OCI-LY7 (cell line): ENCODE measurements at regions of chr10 and their contacts with region 1.

Region 1: DNA sequence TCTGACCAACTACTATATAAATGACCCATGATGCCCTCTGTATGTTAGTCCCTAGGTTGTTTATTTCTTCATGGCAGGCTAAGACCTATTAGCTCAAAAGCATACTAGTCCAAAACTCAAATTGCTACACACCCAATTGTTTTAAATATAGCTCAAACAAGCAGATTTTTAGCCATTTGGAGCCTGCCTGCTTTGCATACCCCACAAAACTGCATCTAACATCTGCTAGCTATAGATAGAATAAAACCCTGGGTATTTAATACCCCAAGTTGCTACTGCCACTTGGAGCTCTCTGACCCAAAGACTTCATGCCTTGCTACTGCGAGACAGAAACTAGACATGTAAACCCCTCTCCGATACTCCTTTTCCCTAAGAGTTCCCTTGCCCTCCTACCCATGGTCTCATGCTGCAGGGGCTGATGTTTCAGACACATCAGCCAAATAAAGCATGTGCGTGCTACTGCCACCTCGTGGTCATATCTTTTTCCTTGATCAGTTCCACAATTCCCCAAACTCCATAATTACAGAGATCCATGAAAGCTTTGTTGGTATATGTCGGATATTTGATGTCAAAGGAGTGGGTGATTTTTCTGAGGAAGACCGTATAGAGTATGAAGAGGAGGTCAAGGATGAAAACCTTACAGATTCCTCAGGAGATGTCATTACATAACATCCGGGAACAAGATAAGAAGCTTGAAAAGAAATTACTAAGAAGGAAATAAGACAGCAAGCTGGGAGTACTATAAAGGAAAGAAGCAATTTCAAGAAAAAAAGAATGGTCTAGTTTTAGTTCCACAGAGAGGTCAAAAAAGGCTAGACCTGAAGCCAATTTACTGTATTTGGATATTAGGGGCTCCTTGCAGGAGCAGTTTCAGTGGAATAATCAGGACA is 386.6 kb downstream of the SH2D4B start:
- DNase-seq: peak; percentile 42
- H3K4me3 ChIP-seq: no peak overlapping the region
- H3K27ac ChIP-seq: no peak overlapping the region
- H3K4me1 ChIP-seq: no peaks in the 10 kb centered on the region
- CTCF ChIP-seq: peak; percentile 90

Region 2: GRCh38 chr10:80699602-80700039 is 224.7 kb before region 1 on chr10:
- CTCF ChIA-PET with region 1: interaction called, 4 read pairs
- POLR2A ChIA-PET with region 1: no interaction called
- intact Hi-C with region 1: loop called (anchors 5 kb)
- DNase-seq: peak; percentile 59
- H3K4me3 ChIP-seq: no peak overlapping the region
- H3K27ac ChIP-seq: no peak overlapping the region
- H3K4me1 ChIP-seq: no peaks in the 10 kb centered on the region
- CTCF ChIP-seq: peak; percentile 88